Breast epithelium (tissue), 4 donors: ENCODE measurements at regions of chr1 and their contacts with region 1.

Region 1: GRCh38 chr1:76799700-76800099 is 67.6 kb upstream of the ST6GALNAC5 start:
- DNase-seq: no peak
- H3K4me3 ChIP-seq: no peak overlapping the region
- H3K27ac ChIP-seq: no peak overlapping the region
- H3K4me1 ChIP-seq: no peaks in the 10 kb centered on the region
- H3K27me3 ChIP-seq: no peaks in the 10 kb centered on the region
- CTCF ChIP-seq: no peak
- POLR2A ChIP-seq: no peak

Region 2: GRCh38 chr1:74933500-74933899 is 1866.2 kb before region 1 on chr1:
- intact Hi-C with region 1: loop called (anchors 10 kb)
- DNase-seq: no peak
- H3K4me3 ChIP-seq: no peak overlapping the region
- H3K27ac ChIP-seq: no peak overlapping the region
- H3K4me1 ChIP-seq: no peaks in the 10 kb centered on the region
- H3K27me3 ChIP-seq: no peaks in the 10 kb centered on the region
- CTCF ChIP-seq: no peak
- POLR2A ChIP-seq: no peak

Region 3: GRCh38 chr1:76238094-76238628 is 561.5 kb before region 1 on chr1:
- intact Hi-C with region 1: no loop called
- DNase-seq: no peak
- H3K4me3 ChIP-seq: no peak overlapping the region
- H3K27ac ChIP-seq: no peak overlapping the region
- H3K4me1 ChIP-seq: no peaks in the 10 kb centered on the region
- H3K27me3 ChIP-seq: no peaks in the 10 kb centered on the region
- CTCF ChIP-seq: no peak
- POLR2A ChIP-seq: no peak

Region 4: DNA sequence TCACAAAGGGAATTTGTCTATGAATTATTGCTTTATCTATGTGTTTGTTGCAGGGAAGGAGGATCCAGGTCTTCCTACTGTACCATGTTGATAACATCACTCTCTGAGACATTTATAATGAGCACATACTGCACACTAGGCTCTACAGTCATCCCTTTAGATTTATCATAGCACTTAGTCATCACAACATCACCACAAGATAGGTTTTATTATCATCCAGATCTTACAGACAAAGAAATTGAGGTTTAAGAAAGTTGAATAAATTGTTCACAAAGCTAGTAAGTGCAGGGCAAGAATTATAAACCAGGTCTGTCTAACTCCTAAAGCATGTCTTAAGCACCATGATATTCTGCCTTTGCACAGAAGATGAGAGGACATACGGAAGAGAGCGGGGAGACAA is 53.5 kb before region 1 on chr1:
- intact Hi-C with region 1: loop called (anchors 2 kb)
- DNase-seq: no peak
- H3K4me3 ChIP-seq: no peak overlapping the region
- H3K27ac ChIP-seq: no peak overlapping the region
- H3K4me1 ChIP-seq: no peaks in the 10 kb centered on the region
- H3K27me3 ChIP-seq: no peaks in the 10 kb centered on the region
- CTCF ChIP-seq: no peak
- POLR2A ChIP-seq: no peak

Region 5: DNA sequence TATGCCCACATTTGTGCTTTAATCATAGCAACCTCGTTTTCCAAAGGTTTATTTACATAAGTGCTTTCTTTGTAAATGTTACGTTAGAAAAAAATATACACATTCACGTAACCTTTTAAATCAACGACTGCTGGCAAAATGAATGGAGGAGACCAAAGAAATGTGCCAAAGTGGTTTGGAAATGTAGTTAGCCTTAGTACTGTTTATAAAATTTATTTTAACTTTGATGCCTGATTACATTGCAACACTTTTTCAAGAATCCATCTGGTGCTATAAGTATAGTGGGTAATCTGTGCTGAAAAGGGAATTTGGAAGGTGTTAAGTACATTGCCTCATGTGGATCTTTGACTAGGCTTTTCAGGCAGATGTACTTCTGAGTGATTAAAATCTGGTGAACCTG is 1958.8 kb after region 1 on chr1:
- intact Hi-C with region 1: no loop called
- DNase-seq: no peak
- H3K4me3 ChIP-seq: no peak overlapping the region
- H3K27ac ChIP-seq: no peak overlapping the region
- H3K4me1 ChIP-seq: no peaks in the 10 kb centered on the region
- H3K27me3 ChIP-seq: no peaks in the 10 kb centered on the region
- CTCF ChIP-seq: no peak
- POLR2A ChIP-seq: no peak